HepG2 (cell line): ENCODE measurements at regions of chr13 and their contacts with region 1.

Region 1: GRCh38 chr13:85806553-85807175 is 7.4 kb upstream of the SLITRK6 start:
- DNase-seq: peak; percentile 41
- ATAC-seq: peak; percentile 74
- H3K4me3 ChIP-seq: no peak overlapping the region
- H3K27ac ChIP-seq: no peak overlapping the region
- H3K4me1 ChIP-seq: no peaks in the 10 kb centered on the region
- H3K27me3 ChIP-seq: no peaks in the 10 kb centered on the region
- CTCF ChIP-seq: peak; percentile 49
- EP300 ChIP-seq: no peak
- POLR2A ChIP-seq: no peak
- RAD21 ChIP-seq: no peak

Region 2: GRCh38 chr13:84844473-84844872 is 962.2 kb before region 1 on chr13:
- CTCF ChIA-PET with region 1: no interaction called
- POLR2A ChIA-PET with region 1: no interaction called
- in situ Hi-C with region 1: no loop called
- intact Hi-C with region 1: loop called (anchors 5 kb)
- DNase-seq: peak; percentile 1
- ATAC-seq: peak; percentile 62; the same call in 2 of the 3 replicates
- H3K4me3 ChIP-seq: no peak overlapping the region
- H3K27ac ChIP-seq: no peak overlapping the region
- H3K4me1 ChIP-seq: no peaks in the 10 kb centered on the region
- H3K27me3 ChIP-seq: no peaks in the 10 kb centered on the region
- CTCF ChIP-seq: peak; percentile 29; the same call in 1 of the 2 replicates
- EP300 ChIP-seq: no peak
- POLR2A ChIP-seq: no peak
- RAD21 ChIP-seq: no peak

Region 3: DNA sequence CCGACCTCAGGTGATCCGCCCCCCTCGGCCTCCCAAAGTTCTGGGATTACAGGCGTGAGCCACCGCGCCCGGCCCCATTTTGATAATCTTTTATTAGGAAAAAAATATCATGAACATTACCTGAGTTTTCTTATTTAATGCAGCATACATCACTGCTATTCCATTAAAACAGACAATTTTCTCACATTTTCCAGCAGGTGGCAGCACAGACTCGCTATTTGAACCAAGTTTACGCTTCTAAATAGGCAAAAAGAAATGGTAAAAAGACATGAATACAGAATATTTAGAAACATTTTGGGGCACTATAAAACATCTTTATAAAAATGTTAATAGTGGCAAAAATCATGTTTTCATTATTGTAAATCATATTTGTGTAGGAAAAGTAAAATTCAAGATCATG is 910.5 kb before region 1 on chr13:
- CTCF ChIA-PET with region 1: interaction called, 37 read pairs
- POLR2A ChIA-PET with region 1: no interaction called
- in situ Hi-C with region 1: loop called (anchors 10 kb)
- intact Hi-C with region 1: loop called (anchors 1 kb)
- DNase-seq: peak; percentile 52
- ATAC-seq: peak; percentile 70
- H3K4me3 ChIP-seq: no peak overlapping the region
- H3K27ac ChIP-seq: no peak overlapping the region
- H3K4me1 ChIP-seq: no peaks in the 10 kb centered on the region
- H3K27me3 ChIP-seq: peaks cover 0 to 6% of the 10 kb centered on the region in 2 experiments; a peak in 2 of 5 replicates
- CTCF ChIP-seq: peak; percentile 69
- EP300 ChIP-seq: no peak
- POLR2A ChIP-seq: no peak
- RAD21 ChIP-seq: 0 out of 2 replicates have a peak, but pooled peaks have one; percentile 25

Region 4: DNA sequence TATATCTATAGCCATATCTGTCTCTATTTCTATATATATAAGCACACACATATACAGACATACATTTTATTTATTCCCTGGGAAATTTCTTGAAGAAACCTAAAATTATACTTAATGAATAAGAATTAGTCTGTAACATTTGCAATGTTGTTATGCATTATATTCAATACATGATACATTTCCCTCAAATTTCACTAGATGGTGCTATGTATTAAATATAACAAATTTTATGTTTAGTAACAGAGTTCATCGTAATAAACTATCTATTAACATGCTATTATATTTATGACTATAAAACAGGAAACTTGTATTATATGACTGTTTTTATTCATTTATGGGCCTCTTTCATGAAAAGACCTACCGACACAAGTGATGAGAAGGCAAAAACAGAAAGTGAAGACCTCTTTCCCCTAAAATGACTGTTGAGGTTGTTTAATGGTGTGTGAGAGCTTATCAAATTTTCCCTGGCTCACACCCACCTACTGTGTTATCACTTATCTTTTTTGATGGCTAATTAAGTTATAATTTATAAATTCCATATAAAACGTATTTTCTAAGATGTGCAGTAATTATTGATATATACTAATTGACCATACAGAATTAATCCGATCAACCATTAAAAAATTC is 889.3 kb before region 1 on chr13:
- CTCF ChIA-PET with region 1: no interaction called
- POLR2A ChIA-PET with region 1: no interaction called
- in situ Hi-C with region 1: no loop called
- intact Hi-C with region 1: loop called (anchors 1 kb)
- DNase-seq: peak; percentile 8
- ATAC-seq: no peak
- H3K4me3 ChIP-seq: no peak overlapping the region
- H3K27ac ChIP-seq: no peak overlapping the region
- H3K4me1 ChIP-seq: no peaks in the 10 kb centered on the region
- H3K27me3 ChIP-seq: no peaks in the 10 kb centered on the region
- CTCF ChIP-seq: no peak
- EP300 ChIP-seq: no peak
- POLR2A ChIP-seq: no peak
- RAD21 ChIP-seq: no peak